WTC11 (cell line): ENCODE measurements at regions of chr17 and their contacts with region 1.

Region 1: GRCh38 chr17:40362696-40363110 is 1.8 kb downstream of the GJD3 start:
- DNase-seq: peak; percentile 92
- ATAC-seq: peak; percentile 66
- H3K4me3 Mint-ChIP-seq: peak overlapping the region; percentile 58
- H3K27ac Mint-ChIP-seq: no peak overlapping the region
- H3K4me1 Mint-ChIP-seq: peaks cover 36% of the 10 kb centered on the region
- H3K27me3 Mint-ChIP-seq: peaks cover 40% of the 10 kb centered on the region
- CTCF ChIP-seq: no peak

Region 2: GRCh38 chr17:40317880-40318829 is 44.5 kb before region 1 on chr17:
- CTCF ChIA-PET with region 1: interaction called, 30 read pairs
- POLR2A ChIA-PET with region 1: no interaction called
- DNase-seq: peak; percentile 96
- ATAC-seq: peak; percentile 93
- H3K4me3 Mint-ChIP-seq: peak overlapping the region; percentile 90
- H3K27ac Mint-ChIP-seq: peak overlapping the region; percentile 97
- H3K4me1 Mint-ChIP-seq: peaks cover 74% of the 10 kb centered on the region
- H3K27me3 Mint-ChIP-seq: peaks cover 22% of the 10 kb centered on the region
- CTCF ChIP-seq: no peak

Region 3: GRCh38 chr17:40374821-40375498 is 12.3 kb after region 1 on chr17:
- CTCF ChIA-PET with region 1: interaction called, 10 read pairs
- POLR2A ChIA-PET with region 1: no interaction called
- DNase-seq: no peak
- ATAC-seq: no peak; the same call in 1 of the 2 replicates
- H3K4me3 Mint-ChIP-seq: no peak overlapping the region
- H3K27ac Mint-ChIP-seq: peak overlapping the region; percentile 30; the same call in 1 of the 2 replicates
- H3K4me1 Mint-ChIP-seq: peaks cover 8% of the 10 kb centered on the region
- H3K27me3 Mint-ChIP-seq: no peaks in the 10 kb centered on the region; the same call in 1 of the 2 replicates
- CTCF ChIP-seq: no peak

Region 4: GRCh38 chr17:40422990-40423616 is 60.4 kb after region 1 on chr17:
- CTCF ChIA-PET with region 1: interaction called, 26 read pairs
- POLR2A ChIA-PET with region 1: no interaction called
- DNase-seq: peak; percentile 67
- ATAC-seq: peak; percentile 80
- H3K4me3 Mint-ChIP-seq: peak overlapping the region; percentile 51
- H3K27ac Mint-ChIP-seq: peak overlapping the region; percentile 91
- H3K4me1 Mint-ChIP-seq: peaks cover 49% of the 10 kb centered on the region
- H3K27me3 Mint-ChIP-seq: no peaks in the 10 kb centered on the region; the same call in 1 of the 2 replicates
- CTCF ChIP-seq: no peak

Region 5: DNA sequence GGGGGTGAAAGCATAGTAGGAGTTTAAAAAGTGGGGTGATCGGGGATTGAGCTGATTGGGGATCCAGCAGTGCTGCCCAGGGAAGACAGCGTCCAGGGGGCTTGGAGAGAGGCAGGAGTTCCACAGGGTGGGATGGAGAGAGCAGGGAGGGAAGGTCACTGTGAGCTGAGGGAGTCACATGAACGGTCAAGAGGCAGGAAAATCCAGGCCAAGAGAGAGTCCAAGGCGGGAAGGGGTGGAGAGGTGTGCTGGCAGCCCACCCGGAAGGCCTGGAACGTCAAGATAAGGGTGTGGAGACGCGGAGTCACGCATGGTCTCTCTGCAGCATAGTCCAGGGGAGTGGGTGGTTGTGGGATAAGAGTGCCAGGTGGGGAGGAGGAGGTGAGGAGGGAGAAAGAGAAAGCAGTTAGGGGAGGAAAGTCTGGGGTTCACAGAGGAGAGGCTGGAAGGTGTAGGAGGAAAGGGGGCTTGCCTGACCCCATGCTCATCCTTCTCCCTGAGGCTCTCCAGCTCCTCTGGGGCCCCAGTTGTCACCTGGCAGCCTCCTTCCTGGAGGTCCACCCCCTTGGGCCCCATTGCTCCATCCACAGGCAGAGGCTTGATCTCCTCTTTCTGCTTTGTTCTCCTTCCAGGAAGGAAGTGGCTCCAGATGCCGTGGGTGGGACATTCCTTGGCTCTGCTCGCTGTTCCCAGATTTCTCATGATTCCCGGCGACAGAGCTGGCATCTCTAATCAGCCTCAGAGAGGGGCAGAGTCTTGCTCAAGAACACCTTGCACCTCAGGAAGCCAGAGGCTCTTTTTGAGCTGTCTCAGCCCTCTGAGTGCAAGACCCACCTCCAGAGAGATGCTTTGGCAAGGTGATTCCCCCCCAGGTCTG is 173.8 kb after region 1 on chr17:
- CTCF ChIA-PET with region 1: interaction called, 102 read pairs
- POLR2A ChIA-PET with region 1: interaction called, 4 read pairs
- DNase-seq: no peak
- ATAC-seq: no peak
- H3K4me3 Mint-ChIP-seq: no peak overlapping the region
- H3K27ac Mint-ChIP-seq: no peak overlapping the region
- H3K4me1 Mint-ChIP-seq: peaks cover 14% of the 10 kb centered on the region
- H3K27me3 Mint-ChIP-seq: no peaks in the 10 kb centered on the region; the same call in 1 of the 2 replicates
- CTCF ChIP-seq: no peak